OCI-LY7 (cell line): ENCODE measurements at regions of chr13 and their contacts with region 1.

Region 1: GRCh38 chr13:46387064-46387851 is at the start of gene RUBCNL:
- DNase-seq: peak; percentile 81
- H3K4me3 ChIP-seq: peak within 1 kb of the TSS; percentile 89
- H3K27ac ChIP-seq: peak within 1 kb of the TSS; percentile 96
- H3K4me1 ChIP-seq: peaks cover 60% of the 10 kb centered on the region
- CTCF ChIP-seq: peak; percentile 52; the same call in 1 of the 2 replicates
- total RNA-seq, gene RUBCNL: 316 and 383 TPM in 2 replicates

Region 2: DNA sequence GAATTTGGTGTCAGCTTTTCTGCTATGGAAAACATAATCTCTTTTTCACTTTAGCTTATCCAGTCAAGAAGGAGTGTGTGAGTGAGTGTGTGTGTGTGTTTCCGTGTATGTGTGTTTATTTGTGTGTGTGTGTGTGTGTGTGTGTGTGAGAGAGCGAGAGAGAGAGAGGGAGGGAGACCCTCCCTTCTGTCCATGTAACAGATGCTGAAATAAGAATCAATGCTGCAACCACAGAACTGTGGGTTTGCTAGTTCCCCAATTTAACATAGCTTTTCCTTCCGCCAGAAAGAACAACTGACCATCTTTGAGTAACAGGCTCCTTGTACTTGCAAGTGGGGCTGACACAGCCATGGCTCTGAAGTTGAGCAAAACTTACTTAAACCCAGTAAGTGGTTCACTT is 210.5 kb before region 1 on chr13:
- CTCF ChIA-PET with region 1: no interaction called
- POLR2A ChIA-PET with region 1: interaction called, 9 read pairs
- intact Hi-C with region 1: loop called (anchors 2 kb)
- DNase-seq: peak; percentile 83
- H3K4me3 ChIP-seq: peak overlapping the region; percentile 92
- H3K27ac ChIP-seq: peak overlapping the region; percentile 92
- H3K4me1 ChIP-seq: peaks cover 77% of the 10 kb centered on the region
- CTCF ChIP-seq: 0 out of 2 replicates have a peak, but pooled peaks have one; percentile 4

Region 3: GRCh38 chr13:46369506-46370277 is 17.6 kb before region 1 on chr13:
- CTCF ChIA-PET with region 1: interaction called, 4 read pairs
- POLR2A ChIA-PET with region 1: interaction called, 211 read pairs
- intact Hi-C with region 1: loop called (anchors 1 kb)
- DNase-seq: peak; percentile 57
- H3K4me3 ChIP-seq: peak overlapping the region; percentile 83
- H3K27ac ChIP-seq: peak overlapping the region; percentile 96
- H3K4me1 ChIP-seq: peaks cover 54% of the 10 kb centered on the region
- CTCF ChIP-seq: no peak

Region 4: GRCh38 chr13:46403851-46404732 is 16.8 kb after region 1 on chr13:
- CTCF ChIA-PET with region 1: interaction called, 3 read pairs
- POLR2A ChIA-PET with region 1: interaction called, 82 read pairs
- intact Hi-C with region 1: loop called (anchors 2 kb)
- DNase-seq: peak; percentile 46
- H3K4me3 ChIP-seq: no peak overlapping the region
- H3K27ac ChIP-seq: peak overlapping the region; percentile 24
- H3K4me1 ChIP-seq: peaks cover 68% of the 10 kb centered on the region
- CTCF ChIP-seq: no peak

Region 5: GRCh38 chr13:46463719-46464118 is 76.5 kb after region 1 on chr13:
- CTCF ChIA-PET with region 1: no interaction called
- POLR2A ChIA-PET with region 1: no interaction called
- intact Hi-C with region 1: loop called (anchors 5 kb)
- DNase-seq: no peak
- H3K4me3 ChIP-seq: no peak overlapping the region
- H3K27ac ChIP-seq: no peak overlapping the region
- H3K4me1 ChIP-seq: no peaks in the 10 kb centered on the region
- CTCF ChIP-seq: no peak

Region 6: DNA sequence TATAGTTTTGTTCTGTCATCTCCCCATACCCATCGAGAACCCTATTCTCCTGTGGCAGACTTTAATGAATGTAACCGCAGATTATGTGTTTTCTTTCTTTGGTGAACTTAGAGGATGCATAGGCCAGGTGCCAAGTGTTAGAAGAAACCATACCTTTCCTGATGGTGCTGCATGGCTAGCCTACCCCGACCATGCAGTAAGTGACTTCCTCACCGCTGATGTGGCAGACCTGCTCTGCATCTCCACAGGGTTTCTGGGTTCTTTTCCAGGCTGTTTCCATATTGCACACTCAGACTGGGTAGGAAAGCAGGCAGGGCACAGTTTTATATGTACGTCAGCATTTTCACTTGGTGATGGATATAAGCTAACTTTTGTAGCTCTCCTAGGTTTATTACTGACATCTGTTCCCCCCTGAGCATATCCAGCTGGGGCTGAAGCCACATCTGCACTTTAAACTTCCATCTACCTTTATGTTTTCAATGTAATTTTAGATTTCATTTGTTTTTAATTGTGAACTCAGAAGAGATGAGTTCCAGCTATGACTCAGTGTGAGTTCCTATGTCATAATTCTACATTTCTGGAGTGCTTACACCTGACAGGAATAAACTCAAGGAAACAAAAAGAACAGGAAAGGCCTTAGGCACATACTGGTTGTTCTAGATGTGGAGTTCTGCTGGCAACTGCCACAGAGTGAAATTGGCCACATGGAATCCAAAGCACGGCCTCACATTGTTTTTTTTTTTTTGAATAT is 208.1 kb after region 1 on chr13:
- CTCF ChIA-PET with region 1: no interaction called
- POLR2A ChIA-PET with region 1: interaction called, 6 read pairs
- intact Hi-C with region 1: loop called (anchors 2 kb)
- DNase-seq: peak; percentile 94
- H3K4me3 ChIP-seq: peak overlapping the region; percentile 58
- H3K27ac ChIP-seq: peak overlapping the region; percentile 98
- H3K4me1 ChIP-seq: peaks cover 99% of the 10 kb centered on the region
- CTCF ChIP-seq: no peak; the same call in 1 of the 2 replicates

Region 7: DNA sequence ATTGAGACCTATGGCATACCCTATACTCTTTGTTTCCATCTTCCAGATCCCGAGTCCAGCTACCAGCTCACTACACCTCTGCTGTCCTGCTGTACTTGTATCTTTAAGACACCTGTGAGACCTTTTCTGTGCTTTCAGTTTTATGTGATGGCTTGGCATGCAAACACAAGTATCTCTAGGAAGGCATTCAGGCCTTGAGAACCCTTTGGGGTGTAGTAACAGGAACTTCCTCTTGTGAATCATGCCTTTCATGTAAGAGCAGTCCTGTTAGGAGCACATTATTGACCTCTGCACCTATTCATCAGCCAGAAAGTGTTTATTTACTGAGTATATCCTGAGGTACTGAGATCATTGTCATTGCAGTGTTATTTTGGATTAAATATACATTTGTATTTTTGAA is 596.6 kb after region 1 on chr13:
- CTCF ChIA-PET with region 1: no interaction called
- POLR2A ChIA-PET with region 1: no interaction called
- intact Hi-C with region 1: loop called (anchors 10 kb)
- DNase-seq: peak; percentile 91
- H3K4me3 ChIP-seq: peak overlapping the region; percentile 59
- H3K27ac ChIP-seq: peak overlapping the region; percentile 93
- H3K4me1 ChIP-seq: peaks cover 56% of the 10 kb centered on the region
- CTCF ChIP-seq: no peak